ENCODE measurements at regions of chr4 and their contacts with region 1.

Region 1: GRCh38 chr4:33060674-33061542 is 2340.7 kb downstream of the PCDH7 start:
- DNase-seq: no peak
- H3K4me3 ChIP-seq: no peak overlapping the region
- H3K27ac ChIP-seq: no peak overlapping the region
- H3K4me1 ChIP-seq: no peaks in the 10 kb centered on the region
- H3K27me3 ChIP-seq: no peaks in the 10 kb centered on the region
- CTCF ChIP-seq: peak; percentile 18 to 37
- POLR2A ChIP-seq: no peak

Region 2: GRCh38 chr4:32462944-32463343 is 598.0 kb before region 1 on chr4:
- CTCF ChIA-PET with region 1: no interaction called
- POLR2A ChIA-PET with region 1: no interaction called
- dilution Hi-C with region 1: no loop called
- intact Hi-C with region 1: loop called (anchors 2 kb)
- DNase-seq: peak; percentile 5
- H3K4me3 ChIP-seq: no peak overlapping the region
- H3K27ac ChIP-seq: no peak overlapping the region
- H3K4me1 ChIP-seq: no peaks in the 10 kb centered on the region
- H3K27me3 ChIP-seq: no peaks in the 10 kb centered on the region
- CTCF ChIP-seq: peak; percentile 27 to 29
- POLR2A ChIP-seq: no peak